ENCODE measurements at regions of chr13 and their contacts with region 1.

Region 1: DNA sequence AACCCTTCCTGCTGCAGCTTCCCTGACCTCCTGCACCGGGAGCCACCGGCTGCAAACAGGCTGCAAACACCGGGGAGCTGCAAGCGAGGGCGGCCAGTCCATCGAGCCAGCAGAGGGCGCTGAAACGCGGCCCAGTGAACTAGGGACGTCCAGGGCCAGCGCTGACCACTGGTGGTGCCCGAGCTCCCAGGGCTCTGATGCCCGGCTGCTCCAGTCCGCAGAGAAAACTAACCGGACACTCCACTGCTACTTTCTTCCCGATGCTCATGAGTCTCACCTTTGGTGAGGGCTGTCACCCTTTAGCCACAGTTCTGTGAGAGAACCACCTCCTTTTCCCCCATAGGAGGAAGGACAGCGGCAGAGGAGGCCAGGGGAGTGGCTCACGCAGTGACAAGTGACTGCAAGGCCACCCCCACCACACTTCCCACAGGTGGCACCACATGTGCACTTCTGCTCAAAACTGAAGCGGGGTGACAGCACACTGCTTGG is 82.8 kb upstream of the MTIF3 start:
- DNase-seq: peak; percentile 86
- H3K4me3 Mint-ChIP-seq: peak overlapping the region; percentile 61
- H3K27ac Mint-ChIP-seq: no peak overlapping the region
- H3K4me1 Mint-ChIP-seq: no peaks in the 10 kb centered on the region
- H3K27me3 Mint-ChIP-seq: no peaks in the 10 kb centered on the region
- CTCF ChIP-seq: peak; percentile 55

Region 2: DNA sequence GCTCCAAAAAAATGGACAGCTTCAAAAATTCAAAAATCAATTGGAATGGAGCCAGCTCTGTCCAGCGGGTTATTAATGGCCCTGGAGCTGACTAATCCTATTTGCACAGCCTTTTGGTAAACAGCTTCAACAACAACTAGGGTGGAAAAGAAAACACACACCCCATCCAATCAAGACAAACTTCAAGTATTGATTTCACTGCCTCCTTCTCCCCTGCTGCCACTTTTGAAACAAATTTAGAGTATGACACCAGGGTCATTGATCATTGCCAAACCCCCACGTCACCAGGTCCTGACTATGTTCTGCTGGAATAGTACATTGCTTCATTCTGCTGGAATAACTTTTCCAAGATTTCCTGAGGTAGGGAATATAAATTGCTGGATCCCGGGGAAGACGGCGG is 165.6 kb before region 1 on chr13:
- CTCF ChIA-PET with region 1: no interaction called
- intact Hi-C with region 1: no loop called
- DNase-seq: no peak
- H3K4me3 Mint-ChIP-seq: no peak overlapping the region
- H3K27ac Mint-ChIP-seq: no peak overlapping the region
- H3K4me1 Mint-ChIP-seq: no peaks in the 10 kb centered on the region
- H3K27me3 Mint-ChIP-seq: peaks cover 5% of the 10 kb centered on the region
- CTCF ChIP-seq: no peak

Region 3: DNA sequence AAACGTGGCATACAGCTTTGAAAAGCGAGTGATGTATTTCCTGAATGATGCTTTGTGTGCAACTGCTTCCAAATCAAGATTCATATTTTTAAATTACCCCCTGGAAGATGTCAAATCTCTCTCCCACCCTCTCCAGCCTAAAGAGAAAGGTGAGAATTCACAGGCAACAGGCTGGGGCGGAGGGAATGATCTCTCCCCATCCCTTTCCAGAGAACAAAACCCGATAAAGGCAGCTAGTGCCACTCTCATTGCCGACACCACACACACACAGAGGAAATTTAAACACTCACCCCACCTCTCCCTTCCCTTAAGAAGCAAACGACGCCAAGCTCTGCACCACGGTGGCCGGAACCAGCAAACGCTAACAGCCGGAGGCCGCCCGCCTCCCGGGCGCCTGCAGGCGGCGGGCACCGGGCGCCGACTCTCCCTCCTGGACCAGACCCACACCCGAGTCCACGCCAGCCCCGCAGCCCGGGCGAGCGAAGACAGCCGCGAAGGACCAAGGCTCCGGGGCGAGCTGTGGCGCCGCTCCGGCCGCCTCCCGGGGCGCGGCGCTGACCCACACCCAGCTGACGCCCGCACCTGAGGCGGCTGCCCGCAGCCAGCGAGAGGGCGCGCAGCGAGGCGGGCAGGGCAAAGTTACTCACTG is 86.7 kb after region 1 on chr13:
- CTCF ChIA-PET with region 1: interaction called, 3 read pairs
- intact Hi-C with region 1: loop called (anchors 5 kb)
- DNase-seq: peak; percentile 34
- H3K4me3 Mint-ChIP-seq: peak overlapping the region; percentile 87
- H3K27ac Mint-ChIP-seq: peak overlapping the region; percentile 30
- H3K4me1 Mint-ChIP-seq: peaks cover 38% of the 10 kb centered on the region
- H3K27me3 Mint-ChIP-seq: no peaks in the 10 kb centered on the region
- CTCF ChIP-seq: peak; percentile 15

Region 4: GRCh38 chr13:27712421-27712820 is 179.2 kb after region 1 on chr13:
- CTCF ChIA-PET with region 1: no interaction called
- intact Hi-C with region 1: loop called (anchors 10 kb)
- DNase-seq: peak; percentile 5
- H3K4me3 Mint-ChIP-seq: no peak overlapping the region
- H3K27ac Mint-ChIP-seq: no peak overlapping the region
- H3K4me1 Mint-ChIP-seq: no peaks in the 10 kb centered on the region
- H3K27me3 Mint-ChIP-seq: peaks cover 13% of the 10 kb centered on the region
- CTCF ChIP-seq: no peak

Region 5: DNA sequence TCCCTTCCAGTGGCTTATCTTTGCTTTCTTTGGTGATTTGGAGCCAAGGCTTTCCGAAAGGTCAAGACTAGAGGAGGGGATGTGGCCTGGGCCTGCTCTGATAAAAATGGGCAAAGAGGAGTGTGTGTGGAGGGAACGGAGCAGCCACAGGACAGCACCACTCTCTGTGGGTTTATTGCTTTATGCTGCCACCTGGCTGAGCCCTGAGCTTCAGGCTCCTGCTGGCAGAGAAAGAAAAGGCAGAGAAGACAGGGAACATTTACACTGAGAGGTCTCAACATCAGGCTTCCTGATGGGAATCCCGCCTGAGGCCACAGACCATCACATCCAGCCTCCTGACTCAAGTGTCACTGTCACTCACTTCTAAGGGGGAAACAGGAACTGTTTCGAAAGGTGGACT is 249.9 kb after region 1 on chr13:
- CTCF ChIA-PET with region 1: no interaction called
- intact Hi-C with region 1: loop called (anchors 10 kb)
- DNase-seq: no peak
- H3K4me3 Mint-ChIP-seq: no peak overlapping the region
- H3K27ac Mint-ChIP-seq: no peak overlapping the region
- H3K4me1 Mint-ChIP-seq: no peaks in the 10 kb centered on the region
- H3K27me3 Mint-ChIP-seq: peaks cover 76% of the 10 kb centered on the region
- CTCF ChIP-seq: no peak

Region 6: DNA sequence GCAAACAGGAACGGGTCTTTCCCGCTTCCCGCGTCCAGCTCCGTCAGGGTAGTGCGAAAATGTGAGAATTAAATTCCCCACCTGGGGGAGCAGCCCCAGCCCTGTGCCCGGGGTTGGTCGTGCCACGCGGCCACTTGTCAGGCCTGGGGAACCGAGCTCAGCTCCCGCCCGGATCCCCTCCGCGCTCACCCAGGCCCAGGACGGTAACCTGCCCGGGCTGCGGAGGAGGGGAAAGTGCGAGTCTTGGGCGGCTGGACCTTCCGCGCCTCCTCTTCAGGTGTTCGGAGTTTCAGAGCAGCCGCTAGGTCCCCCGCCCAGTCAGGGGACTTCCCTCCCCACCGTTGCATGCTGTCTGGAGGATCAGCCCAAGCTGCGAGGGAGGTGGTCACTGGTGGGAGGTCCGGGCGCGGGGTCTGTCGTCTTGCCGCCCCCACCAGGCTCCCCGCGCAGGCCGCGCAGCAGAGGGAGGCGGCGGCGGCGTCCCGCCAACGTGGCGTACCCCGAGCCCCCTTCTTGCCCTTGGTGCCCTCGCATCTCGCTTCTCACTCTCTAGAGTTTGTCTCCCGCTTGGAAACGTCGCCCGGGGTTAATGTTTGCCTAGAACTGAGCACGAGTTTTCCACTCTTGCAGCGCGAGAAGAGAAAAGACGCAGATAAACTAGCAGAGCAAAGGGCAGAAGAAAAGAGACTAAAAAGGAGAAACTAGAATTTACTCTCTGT is 447.2 kb after region 1 on chr13:
- CTCF ChIA-PET with region 1: no interaction called
- intact Hi-C with region 1: loop called (anchors 10 kb)
- DNase-seq: no peak
- H3K4me3 Mint-ChIP-seq: peak overlapping the region; percentile 19
- H3K27ac Mint-ChIP-seq: no peak overlapping the region
- H3K4me1 Mint-ChIP-seq: peaks cover 16% of the 10 kb centered on the region
- H3K27me3 Mint-ChIP-seq: peaks cover 69% of the 10 kb centered on the region
- CTCF ChIP-seq: no peak